ENCODE measurements at regions of chr17 and their contacts with region 1.

Region 1: GRCh38 chr17:17476865-17477467 is at the start of gene MED9:
- DNase-seq: peak; percentile 88 to 91
- H3K4me3 ChIP-seq: peak within 1 kb of the TSS; percentile 94 to 98 (median 97)
- H3K27ac ChIP-seq: peak within 1 kb of the TSS; percentile 80 to 83 (median 83)
- H3K4me1 ChIP-seq: peaks cover 31% of the 10 kb centered on the region in 2 donors
- H3K27me3 ChIP-seq: no peaks in the 10 kb centered on the region
- CTCF ChIP-seq: no peak
- POLR2A ChIP-seq: peak in 1 of 2 donors; percentile 78
- total RNA-seq, gene MED9: 27.9 to 35.4 (median 30.8) TPM

Region 2: GRCh38 chr17:17416007-17416399 is 61.0 kb before region 1 on chr17:
- intact Hi-C with region 1: loop called (anchors 10 kb)
- DNase-seq: peak; percentile 20 to 29
- H3K4me3 ChIP-seq: no peak overlapping the region
- H3K27ac ChIP-seq: peak overlapping the region; percentile 78 to 92 (median 78)
- H3K4me1 ChIP-seq: peaks cover 51 to 59% of the 10 kb centered on the region in 2 donors
- H3K27me3 ChIP-seq: no peaks in the 10 kb centered on the region
- CTCF ChIP-seq: no peak
- POLR2A ChIP-seq: no peak